Heart right ventricle (tissue), 16 donors: ENCODE measurements at regions of chr15 and their contacts with region 1.

Region 1: GRCh38 chr15:52331490-52332240 is 36.1 kb upstream of the MYO5C start:
- DNase-seq: no peak
- ATAC-seq: peak in 7 of 8 donors; percentile 56 to 78 (median 63)
- H3K4me3 ChIP-seq: no peak overlapping the region
- H3K27ac ChIP-seq: no peak overlapping the region
- H3K4me1 ChIP-seq: peaks cover 0 to 9% (median 0%) of the 10 kb centered on the region in 9 donors
- H3K27me3 ChIP-seq: no peaks in the 10 kb centered on the region
- CTCF ChIP-seq: peak in 8 of 9 donors; percentile 16 to 65 (median 49)

Region 2: GRCh38 chr15:52261498-52262242 is 70.0 kb before region 1 on chr15:
- intact Hi-C with region 1: loop called in 4 of 10 experiments (anchors 5 to 10 kb)
- DNase-seq: peak; percentile 40 to 79
- ATAC-seq: peak; percentile 84 to 96 (median 94)
- H3K4me3 ChIP-seq: no peak overlapping the region
- H3K27ac ChIP-seq: peak overlapping the region in 9 of 10 donors; percentile 37 to 79 (median 59)
- H3K4me1 ChIP-seq: peaks cover 0 to 35% (median 30%) of the 10 kb centered on the region in 9 donors
- H3K27me3 ChIP-seq: no peaks in the 10 kb centered on the region
- CTCF ChIP-seq: peak in 4 of 9 donors; percentile 24 to 32 (median 28)

Region 3: DNA sequence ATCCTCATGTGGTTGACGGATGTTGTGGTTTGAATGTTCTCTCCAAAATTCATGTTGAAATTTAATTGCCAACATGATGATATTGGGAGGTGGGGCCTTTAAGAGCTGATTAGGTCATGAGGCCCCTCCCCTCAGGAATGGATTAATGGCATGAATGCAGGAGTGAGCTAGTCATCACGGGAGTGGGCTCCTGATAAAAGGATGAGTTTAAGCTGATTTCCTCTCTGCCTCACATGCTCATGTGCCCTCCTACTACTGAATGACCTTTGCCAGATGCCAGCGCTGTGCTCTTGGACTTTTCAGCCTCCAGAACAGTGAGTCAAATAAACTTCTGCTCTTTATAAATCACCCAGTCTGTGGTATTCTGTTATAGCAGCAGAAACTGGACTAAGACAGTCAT is 85.9 kb after region 1 on chr15:
- intact Hi-C with region 1: no loop called
- DNase-seq: no peak
- ATAC-seq: peak in 1 of 8 donors; percentile 33
- H3K4me3 ChIP-seq: no peak overlapping the region
- H3K27ac ChIP-seq: no peak overlapping the region
- H3K4me1 ChIP-seq: peaks cover 0 to 11% (median 0%) of the 10 kb centered on the region in 9 donors
- H3K27me3 ChIP-seq: no peaks in the 10 kb centered on the region
- CTCF ChIP-seq: no peak

Region 4: DNA sequence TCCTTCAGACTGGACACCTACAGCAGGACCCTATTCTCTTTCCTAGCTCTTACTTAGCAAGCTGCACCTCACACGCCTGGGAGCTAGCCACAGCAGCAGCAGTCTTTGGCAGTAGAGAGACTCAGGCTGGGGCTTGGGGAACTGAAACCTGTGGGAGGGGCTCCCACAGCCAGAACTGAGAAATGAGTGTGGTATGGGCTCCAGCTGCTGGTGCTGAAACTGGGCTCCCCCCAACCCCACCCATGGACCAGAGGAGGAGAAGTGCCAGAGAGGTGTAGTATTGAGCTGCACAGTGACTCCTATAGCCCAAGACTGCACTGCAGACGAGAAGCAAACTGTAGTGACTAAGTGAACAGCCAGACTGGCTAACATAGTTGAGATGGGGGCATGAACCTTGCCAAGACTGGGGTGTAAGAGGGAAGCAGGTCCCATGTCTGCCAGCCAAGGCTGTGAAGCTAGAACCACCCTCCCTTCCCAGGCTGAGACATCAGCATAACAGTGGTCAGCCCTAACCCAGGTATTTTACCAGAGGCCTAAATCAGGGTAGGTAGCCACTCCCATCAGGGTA is 134.6 kb after region 1 on chr15:
- intact Hi-C with region 1: loop called in 2 of 10 experiments (anchors 2 to 10 kb)
- DNase-seq: peak; percentile 22 to 26
- ATAC-seq: peak; percentile 61 to 84 (median 78)
- H3K4me3 ChIP-seq: no peak overlapping the region
- H3K27ac ChIP-seq: peak overlapping the region in 3 of 10 donors; percentile 11 to 41 (median 16)
- H3K4me1 ChIP-seq: peaks cover 0 to 49% (median 14%) of the 10 kb centered on the region in 9 donors
- H3K27me3 ChIP-seq: no peaks in the 10 kb centered on the region
- CTCF ChIP-seq: no peak

Region 5: DNA sequence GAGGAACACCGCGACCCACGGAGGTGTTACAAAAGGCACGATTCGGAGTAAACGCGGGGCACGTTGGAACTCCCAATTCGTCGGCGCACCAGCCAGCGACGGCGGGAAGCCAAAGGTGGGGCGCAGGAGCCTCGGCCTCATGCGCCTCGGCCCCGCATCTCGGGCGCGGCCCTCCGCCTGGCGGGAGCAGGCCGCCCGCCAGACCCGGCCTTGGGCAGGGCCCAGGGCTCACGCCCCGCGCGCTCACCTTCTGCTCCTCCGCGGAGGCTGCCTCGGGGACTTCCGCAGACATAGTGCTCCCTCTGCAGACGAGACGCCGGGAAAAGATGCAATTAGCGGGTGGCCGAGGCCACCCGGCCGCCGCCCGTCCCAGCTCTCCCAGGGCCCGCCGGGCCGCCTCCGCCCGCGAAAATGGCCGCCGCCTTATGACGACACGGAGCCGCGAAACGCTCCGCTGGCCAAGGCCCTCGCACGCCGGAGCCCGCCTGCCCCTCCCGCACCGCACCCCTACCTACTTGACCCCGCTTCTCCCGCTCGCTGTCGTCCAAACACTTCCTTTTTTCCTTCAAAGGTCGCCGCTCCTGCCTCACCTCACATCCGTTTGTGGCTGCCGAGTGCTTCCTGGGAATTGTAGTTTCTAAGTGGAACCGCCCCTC is 237.1 kb after region 1 on chr15 and contains the start of gene ARPP19:
- intact Hi-C with region 1: loop called in 2 of 10 experiments (anchors 10 kb)
- DNase-seq: peak; percentile 86 to 90
- ATAC-seq: peak; percentile 89 to 94 (median 92)
- H3K4me3 ChIP-seq: peak within 1 kb of the TSS; percentile 45 to 92 (median 75)
- H3K27ac ChIP-seq: peak within 1 kb of the TSS; percentile 69 to 96 (median 93)
- H3K4me1 ChIP-seq: peaks cover 3 to 46% (median 41%) of the 10 kb centered on the region in 9 donors
- H3K27me3 ChIP-seq: no peaks in the 10 kb centered on the region
- CTCF ChIP-seq: peak in 5 of 9 donors; percentile 23 to 45 (median 40)
- total RNA-seq, gene ARPP19: 121 to 166 (median 147) TPM